A673 (cell line): ENCODE measurements at regions of chrX and their contacts with region 1.

Region 1: GRCh38 chrX:133171962-133172708 is 46.0 kb downstream of the TFDP3 start:
- DNase-seq: peak; percentile 87
- H3K4me3 ChIP-seq: no peak overlapping the region
- H3K27ac ChIP-seq: peak overlapping the region; percentile 13
- H3K4me1 ChIP-seq: peaks cover 34% of the 10 kb centered on the region
- H3K27me3 ChIP-seq: no peaks in the 10 kb centered on the region
- CTCF ChIP-seq: peak; percentile 61

Region 2: GRCh38 chrX:132740316-132741123 is 431.6 kb before region 1 on chrX:
- CTCF ChIA-PET with region 1: no interaction called
- POLR2A ChIA-PET with region 1: no interaction called
- intact Hi-C with region 1: loop called (anchors 5 kb)
- DNase-seq: peak; percentile 32
- H3K4me3 ChIP-seq: no peak overlapping the region
- H3K27ac ChIP-seq: no peak overlapping the region
- H3K4me1 ChIP-seq: no peaks in the 10 kb centered on the region
- H3K27me3 ChIP-seq: no peaks in the 10 kb centered on the region
- CTCF ChIP-seq: peak; percentile 77

Region 3: DNA sequence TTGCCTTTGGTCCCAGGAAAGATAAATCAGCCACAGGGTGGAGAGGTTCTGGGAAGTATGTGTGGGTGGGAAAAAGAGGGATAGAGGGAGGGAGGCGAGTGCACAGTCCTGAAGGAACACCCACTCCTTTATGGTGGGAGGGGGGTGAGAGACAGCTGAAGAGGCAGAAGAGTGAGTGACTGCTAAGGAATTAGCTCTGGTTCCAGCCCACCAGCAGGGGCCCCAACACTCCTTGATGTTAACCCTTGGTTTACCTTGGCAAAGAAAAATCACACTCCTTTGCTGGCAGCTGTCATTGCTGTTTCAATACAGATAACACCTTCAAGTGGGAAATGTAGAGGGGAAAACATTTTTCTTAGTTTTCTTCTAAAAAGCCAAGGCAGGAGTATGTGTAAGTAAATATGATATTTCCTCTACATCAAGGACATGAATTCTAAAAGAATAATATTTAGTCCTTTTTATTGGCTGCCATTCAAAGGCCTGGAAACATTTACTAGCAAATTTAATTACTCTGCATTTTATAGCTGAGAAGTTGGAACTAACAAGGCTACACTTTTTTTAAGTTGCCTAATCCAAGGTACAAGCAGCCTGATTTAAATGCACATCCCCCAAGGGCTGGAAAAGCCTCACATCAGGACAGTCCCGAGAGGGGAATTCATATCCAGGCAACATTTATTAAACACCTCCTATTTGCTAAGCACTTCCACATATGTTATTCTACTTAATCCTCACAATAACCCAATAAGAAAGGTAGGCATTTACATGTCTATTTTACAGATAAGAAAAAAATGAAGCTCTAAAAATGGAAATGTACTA is 295.4 kb before region 1 on chrX:
- CTCF ChIA-PET with region 1: no interaction called
- POLR2A ChIA-PET with region 1: no interaction called
- intact Hi-C with region 1: no loop called
- DNase-seq: no peak
- H3K4me3 ChIP-seq: no peak overlapping the region
- H3K27ac ChIP-seq: no peak overlapping the region
- H3K4me1 ChIP-seq: no peaks in the 10 kb centered on the region
- H3K27me3 ChIP-seq: no peaks in the 10 kb centered on the region
- CTCF ChIP-seq: no peak

Region 4: DNA sequence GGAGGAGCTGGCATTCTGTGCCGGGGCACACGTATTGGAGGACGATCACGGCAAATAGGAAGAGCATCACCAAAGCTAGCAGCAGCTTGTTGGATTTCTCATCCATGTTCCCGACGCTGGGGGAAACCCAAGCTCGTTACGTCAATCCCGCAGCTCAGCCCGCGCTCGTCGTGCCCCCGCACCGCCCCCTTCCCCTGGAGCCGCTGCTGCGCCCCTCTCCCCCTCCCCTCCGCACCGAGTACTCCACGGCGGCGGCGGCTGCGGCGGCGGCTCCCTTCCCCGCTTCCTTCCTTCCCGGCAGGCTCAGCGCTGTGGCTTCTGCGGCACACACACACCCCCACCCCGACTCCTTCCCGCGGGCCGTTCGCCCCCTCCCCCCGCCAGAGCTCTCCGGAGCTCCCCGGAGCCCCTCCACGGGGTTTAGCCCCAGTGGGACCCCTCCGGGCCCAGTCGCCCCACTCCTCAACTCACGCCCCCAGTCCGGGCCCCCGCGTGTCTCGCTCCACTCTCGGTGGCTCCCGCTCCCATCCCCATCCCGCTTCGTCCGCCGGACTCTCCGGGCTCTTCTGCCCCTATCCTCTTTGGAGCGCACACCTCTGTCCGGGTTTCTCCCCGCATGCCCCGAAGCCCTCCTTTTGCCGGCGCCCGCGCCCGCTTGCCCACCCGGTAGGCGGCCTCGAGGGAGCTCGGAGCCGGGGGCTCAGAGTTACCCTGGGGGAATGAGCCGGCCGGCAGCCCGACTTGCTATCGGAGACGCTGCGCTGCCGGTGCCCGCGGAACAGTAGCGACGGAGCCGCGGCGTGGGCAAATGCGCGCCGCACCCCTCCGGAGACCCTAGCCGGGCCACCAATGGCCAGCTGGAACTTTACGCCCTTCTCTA is 214.7 kb before region 1 on chrX:
- CTCF ChIA-PET with region 1: no interaction called
- POLR2A ChIA-PET with region 1: no interaction called
- intact Hi-C with region 1: loop called (anchors 2 kb)
- DNase-seq: peak; percentile 43
- H3K4me3 ChIP-seq: peak overlapping the region; percentile 48
- H3K27ac ChIP-seq: no peak overlapping the region
- H3K4me1 ChIP-seq: peaks cover 3% of the 10 kb centered on the region
- H3K27me3 ChIP-seq: peaks cover 41% of the 10 kb centered on the region
- CTCF ChIP-seq: no peak

Region 5: DNA sequence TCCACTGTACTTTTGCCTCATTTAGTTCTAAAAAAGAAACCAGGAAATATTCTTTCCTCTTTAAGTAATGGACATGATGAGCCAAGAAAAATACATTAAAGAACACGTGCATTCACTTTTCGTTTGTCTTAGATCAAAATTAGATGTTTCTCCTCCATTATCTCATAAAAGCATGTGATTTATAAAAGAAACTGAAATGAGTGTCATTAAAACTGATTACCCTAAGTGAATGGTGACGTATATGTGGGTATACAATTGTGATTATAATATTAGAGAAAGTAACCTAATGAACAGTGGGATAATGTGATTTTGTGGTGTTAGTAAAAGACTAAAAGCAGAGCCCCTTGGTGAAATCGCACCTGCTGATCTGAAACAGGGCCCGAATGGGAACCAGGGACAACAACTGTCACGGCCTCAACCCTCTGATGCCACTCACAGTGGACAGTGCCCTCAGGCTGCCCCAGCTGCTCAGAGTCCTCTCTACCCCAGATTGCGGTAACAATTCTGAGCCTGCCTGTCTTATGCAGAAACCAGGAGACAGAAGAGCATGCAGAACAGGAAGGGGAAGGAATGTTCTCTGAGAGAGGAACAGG is 188.0 kb before region 1 on chrX:
- CTCF ChIA-PET with region 1: no interaction called
- POLR2A ChIA-PET with region 1: no interaction called
- intact Hi-C with region 1: no loop called
- DNase-seq: no peak
- H3K4me3 ChIP-seq: no peak overlapping the region
- H3K27ac ChIP-seq: no peak overlapping the region
- H3K4me1 ChIP-seq: no peaks in the 10 kb centered on the region
- H3K27me3 ChIP-seq: no peaks in the 10 kb centered on the region
- CTCF ChIP-seq: no peak

Region 6: DNA sequence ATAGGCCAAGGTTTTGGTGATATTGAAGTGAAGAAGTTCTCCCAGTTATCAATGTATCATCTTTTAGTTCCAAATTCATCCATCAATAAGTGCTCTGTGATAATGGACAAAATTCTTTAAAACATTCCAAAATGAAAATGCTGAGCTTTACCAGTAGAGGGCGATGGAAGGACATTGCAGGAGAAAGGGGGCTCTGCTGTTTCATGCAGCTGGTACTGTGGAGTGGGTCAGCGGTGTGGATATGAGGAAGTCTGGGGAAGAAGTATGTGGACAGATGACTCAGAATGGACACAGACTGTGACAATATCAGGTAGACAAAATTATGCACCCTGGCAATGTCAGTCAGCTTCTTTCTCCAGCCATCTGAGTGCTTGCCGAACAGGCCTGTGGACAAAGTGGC is 167.1 kb before region 1 on chrX:
- CTCF ChIA-PET with region 1: interaction called, 3 read pairs
- POLR2A ChIA-PET with region 1: no interaction called
- intact Hi-C with region 1: loop called (anchors 1 kb)
- DNase-seq: peak; percentile 41
- H3K4me3 ChIP-seq: no peak overlapping the region
- H3K27ac ChIP-seq: no peak overlapping the region
- H3K4me1 ChIP-seq: no peaks in the 10 kb centered on the region
- H3K27me3 ChIP-seq: no peaks in the 10 kb centered on the region
- CTCF ChIP-seq: peak; percentile 81

Region 7: DNA sequence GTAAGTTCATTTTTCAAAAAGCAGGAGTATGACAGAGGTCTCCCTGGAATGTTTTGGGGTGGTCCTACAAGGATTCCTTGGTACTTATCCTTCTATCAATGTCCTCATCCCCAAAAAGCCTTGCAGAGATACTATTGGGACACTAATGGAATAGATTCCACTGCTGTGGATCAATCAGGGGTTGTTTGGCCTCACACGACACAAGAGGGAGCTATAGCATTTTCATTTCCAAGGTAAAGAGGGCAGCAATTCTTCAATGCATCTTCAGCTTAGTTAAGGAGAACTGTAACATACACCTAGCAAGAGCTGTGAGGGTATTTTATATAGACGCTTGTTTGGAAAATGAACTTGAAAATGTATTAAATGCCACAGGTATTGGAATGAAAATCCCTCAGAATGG is 126.1 kb before region 1 on chrX:
- CTCF ChIA-PET with region 1: no interaction called
- POLR2A ChIA-PET with region 1: no interaction called
- intact Hi-C with region 1: loop called (anchors 5 kb)
- DNase-seq: peak; percentile 35
- H3K4me3 ChIP-seq: no peak overlapping the region
- H3K27ac ChIP-seq: no peak overlapping the region
- H3K4me1 ChIP-seq: no peaks in the 10 kb centered on the region
- H3K27me3 ChIP-seq: peaks cover 4% of the 10 kb centered on the region
- CTCF ChIP-seq: peak; percentile 51

Region 8: GRCh38 chrX:133215747-133216146 is 43.6 kb after region 1 on chrX:
- CTCF ChIA-PET with region 1: interaction called, 3 read pairs
- POLR2A ChIA-PET with region 1: no interaction called
- intact Hi-C with region 1: loop called (anchors 2 kb)
- DNase-seq: peak; percentile 52
- H3K4me3 ChIP-seq: no peak overlapping the region
- H3K27ac ChIP-seq: no peak overlapping the region
- H3K4me1 ChIP-seq: peaks cover 5% of the 10 kb centered on the region
- H3K27me3 ChIP-seq: no peaks in the 10 kb centered on the region
- CTCF ChIP-seq: peak; percentile 69

Region 9: GRCh38 chrX:133297295-133297694 is 125.2 kb after region 1 on chrX:
- CTCF ChIA-PET with region 1: no interaction called
- POLR2A ChIA-PET with region 1: no interaction called
- intact Hi-C with region 1: no loop called
- DNase-seq: peak; percentile 9
- H3K4me3 ChIP-seq: no peak overlapping the region
- H3K27ac ChIP-seq: no peak overlapping the region
- H3K4me1 ChIP-seq: no peaks in the 10 kb centered on the region
- H3K27me3 ChIP-seq: no peaks in the 10 kb centered on the region
- CTCF ChIP-seq: no peak

Region 10: DNA sequence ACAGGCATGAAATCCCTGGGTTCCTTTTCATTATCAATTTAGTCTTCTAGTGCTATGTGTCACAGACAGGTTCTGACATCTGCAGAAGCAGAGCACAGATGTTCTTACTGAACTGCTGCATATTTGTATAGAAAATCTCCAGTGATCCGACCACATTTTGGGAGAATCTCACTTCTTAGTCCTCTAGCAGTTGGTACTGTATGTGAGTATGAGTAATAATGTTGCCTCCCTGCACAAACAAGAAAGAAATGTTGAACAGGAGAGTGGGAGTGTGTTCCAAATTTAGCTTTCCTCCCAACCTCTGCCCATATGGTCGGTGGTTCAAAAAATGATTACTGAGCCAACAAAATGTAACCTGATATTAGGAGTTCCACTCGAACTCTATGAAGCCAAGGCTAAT is 408.5 kb after region 1 on chrX:
- CTCF ChIA-PET with region 1: no interaction called
- POLR2A ChIA-PET with region 1: no interaction called
- intact Hi-C with region 1: no loop called
- DNase-seq: no peak
- H3K4me3 ChIP-seq: no peak overlapping the region
- H3K27ac ChIP-seq: no peak overlapping the region
- H3K4me1 ChIP-seq: no peaks in the 10 kb centered on the region
- H3K27me3 ChIP-seq: no peaks in the 10 kb centered on the region
- CTCF ChIP-seq: no peak